Right ventricle myocardium superior (tissue), 1 donor: ENCODE measurements at regions of chr5 and their contacts with region 1.

Region 1: DNA sequence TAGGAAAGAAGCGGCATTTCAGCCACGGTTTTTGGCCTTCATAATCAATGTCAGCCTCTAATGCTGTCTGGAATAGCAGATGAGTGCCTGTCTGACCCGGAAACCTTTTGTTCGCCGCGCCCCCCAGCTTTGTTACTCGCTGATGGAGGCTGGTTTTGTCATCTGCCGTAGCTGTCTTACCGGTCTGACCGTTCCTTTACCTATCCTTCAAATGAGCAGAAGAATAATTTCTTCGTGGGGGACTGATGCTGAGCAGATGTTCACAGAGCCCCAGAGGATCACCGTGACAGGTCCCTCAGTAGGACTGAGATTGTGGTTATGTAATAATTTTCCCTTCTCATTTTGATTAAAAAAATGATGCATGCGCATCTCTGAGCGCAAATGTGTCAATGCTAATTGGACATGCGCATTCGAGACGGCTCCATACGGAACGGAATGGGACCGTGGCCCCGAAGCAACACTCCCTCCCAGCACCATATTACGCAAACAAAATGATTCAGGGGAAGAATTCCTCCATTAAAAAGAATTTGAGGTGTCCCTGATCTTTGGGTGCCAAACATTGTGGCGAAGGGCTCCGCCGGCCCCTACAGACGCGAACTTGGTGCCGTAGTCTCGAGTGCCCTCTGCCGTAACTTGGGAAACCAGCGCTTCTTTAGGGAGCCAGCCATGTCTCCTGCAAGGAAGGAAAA is 27.6 kb downstream of the TLX3 start:
- DNase-seq: peak; percentile 55
- ATAC-seq: peak; percentile 78

Region 2: DNA sequence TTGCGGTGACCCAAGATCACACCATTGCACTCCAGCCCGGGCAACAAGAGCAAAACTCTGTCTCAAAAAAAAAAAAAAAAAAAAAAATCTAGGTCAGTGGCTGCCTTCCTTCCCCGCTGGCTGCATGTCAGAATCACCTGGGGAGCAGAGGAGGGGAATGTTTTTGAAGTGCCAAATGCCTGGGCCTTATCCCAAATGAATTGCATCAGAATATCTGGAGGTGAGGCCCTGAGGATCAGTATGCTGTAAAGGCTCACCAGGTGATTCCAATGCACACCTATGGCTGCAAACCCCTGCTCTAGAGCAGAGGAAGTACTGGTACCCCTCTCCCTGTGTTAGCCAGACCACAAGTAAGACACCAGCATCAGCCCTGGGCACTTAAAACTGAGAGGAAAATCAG is 597.8 kb before region 1 on chr5:
- intact Hi-C with region 1: loop called (anchors 10 kb)
- DNase-seq: no peak
- ATAC-seq: no peak

Region 3: GRCh38 chr5:171207256-171207847 is 129.3 kb before region 1 on chr5:
- intact Hi-C with region 1: loop called (anchors 5 kb)
- DNase-seq: no peak
- ATAC-seq: no peak

Region 4: DNA sequence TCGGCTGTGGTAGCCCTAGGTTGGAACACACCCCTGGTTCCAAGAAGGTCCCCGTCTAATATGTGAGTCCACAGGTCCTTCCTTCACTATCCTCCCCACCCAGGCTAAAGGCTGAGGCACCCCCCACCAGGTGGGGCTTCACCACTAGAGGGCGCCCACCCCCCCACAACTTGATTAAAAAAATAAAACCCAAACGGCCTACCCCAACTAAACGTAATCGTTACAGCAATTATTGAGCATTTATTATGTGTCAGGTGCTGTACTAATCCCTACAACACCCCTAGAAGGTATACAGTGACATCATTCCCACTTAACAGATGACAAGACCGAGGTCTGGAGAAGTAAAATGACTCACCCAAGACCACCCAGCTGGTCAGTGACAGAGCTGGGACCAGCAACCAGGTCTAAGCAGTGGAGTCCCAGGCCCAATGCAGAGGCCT is 147.8 kb after region 1 on chr5:
- intact Hi-C with region 1: no loop called
- DNase-seq: no peak
- ATAC-seq: peak; percentile 25